H1 (cell line): ENCODE measurements at regions of chr17 and their contacts with region 1.

Region 1: GRCh38 chr17:78366109-78366848 is 6.4 kb upstream of the SOCS3 start:
- DNase-seq: no peak
- H3K4me3 ChIP-seq: peak overlapping the region in 2 of 4 experiments; percentile 2 to 43; a peak in 3 of 8 replicates
- H3K27ac ChIP-seq: peak overlapping the region; percentile 80
- H3K4me1 ChIP-seq: peaks cover 17 to 55% (median 45%) of the 10 kb centered on the region in 4 experiments
- H3K27me3 ChIP-seq: no peaks in the 10 kb centered on the region
- CTCF ChIP-seq: no peak
- EP300 ChIP-seq: no peak
- POLR2A ChIP-seq: no peak; a peak in 1 of 3 replicates
- RAD21 ChIP-seq: no peak

Region 2: DNA sequence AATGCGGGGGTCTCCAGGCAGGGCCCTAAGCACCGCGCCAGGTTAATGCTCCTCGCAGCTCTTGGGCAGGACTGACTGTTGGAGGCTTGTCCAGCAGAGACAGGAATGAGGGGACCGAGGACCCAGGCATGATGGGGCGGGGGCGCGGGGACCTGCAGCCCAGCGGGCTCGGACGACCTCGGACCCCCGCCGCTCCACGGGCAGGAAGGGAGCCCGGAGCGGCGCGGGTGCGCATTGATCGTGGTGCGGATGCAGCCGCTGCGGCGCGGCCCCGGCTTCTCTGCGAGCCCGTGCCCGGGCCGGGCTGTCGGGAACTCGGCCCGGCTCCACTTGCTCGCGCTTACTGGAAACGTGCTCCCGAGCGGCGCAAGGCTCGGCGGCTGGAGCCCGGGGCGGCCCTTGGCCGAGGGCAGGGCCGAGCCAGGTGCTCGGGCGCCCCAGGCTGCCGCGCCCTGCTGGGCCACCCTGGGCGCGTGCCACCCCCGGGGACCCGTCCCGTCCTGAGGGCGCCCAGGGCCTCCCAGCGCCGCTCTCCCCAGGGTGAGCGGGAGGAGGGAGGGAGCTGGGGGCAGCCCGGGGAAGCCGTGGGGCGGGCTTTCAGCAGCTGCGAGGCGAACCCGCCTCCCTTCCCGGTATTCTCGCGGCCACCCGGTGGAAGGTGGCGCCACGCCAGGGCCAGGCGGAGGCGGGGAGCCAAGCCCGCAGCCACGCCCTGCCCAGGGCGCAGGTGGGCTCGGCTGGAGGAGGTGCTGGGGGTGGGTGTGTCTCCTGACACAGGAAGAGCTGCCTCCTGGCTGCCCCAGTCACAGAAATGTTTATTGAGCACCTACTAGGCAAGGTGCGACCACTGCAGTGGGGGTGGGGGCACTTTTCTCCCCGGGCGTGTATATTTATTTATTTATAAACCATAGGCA is 52.3 kb before region 1 on chr17:
- CTCF ChIA-PET with region 1: interaction called, 20 read pairs
- POLR2A ChIA-PET with region 1: interaction called, 28 read pairs
- DNase-seq: peak; percentile 77 to 88
- H3K4me3 ChIP-seq: peak overlapping the region; percentile 26 to 67 (median 44)
- H3K27ac ChIP-seq: no peak overlapping the region
- H3K4me1 ChIP-seq: peaks cover 8 to 38% (median 32%) of the 10 kb centered on the region in 4 experiments
- H3K27me3 ChIP-seq: peaks cover 0 to 3% (median 0%) of the 10 kb centered on the region in 4 experiments; a peak in 2 of 7 replicates
- CTCF ChIP-seq: no peak
- EP300 ChIP-seq: no peak
- POLR2A ChIP-seq: no peak; a peak in 1 of 3 replicates
- RAD21 ChIP-seq: no peak